ENCODE measurements at regions of chr12 and their contacts with region 1.

Region 1: GRCh38 chr12:9813821-9814809 is 13.2 kb upstream of the KLRF1 start:
- DNase-seq: peak; percentile 81
- H3K4me3 ChIP-seq: peak overlapping the region; percentile 27
- H3K27ac ChIP-seq: no peak overlapping the region
- H3K4me1 ChIP-seq: peaks cover 5% of the 10 kb centered on the region
- H3K27me3 ChIP-seq: no peaks in the 10 kb centered on the region
- CTCF ChIP-seq: peak; percentile 97

Region 2: GRCh38 chr12:9925708-9926393 is 111.7 kb after region 1 on chr12:
- CTCF ChIA-PET with region 1: no interaction called
- POLR2A ChIA-PET with region 1: no interaction called
- intact Hi-C with region 1: loop called (anchors 1 kb)
- DNase-seq: peak; percentile 59
- H3K4me3 ChIP-seq: no peak overlapping the region
- H3K27ac ChIP-seq: no peak overlapping the region
- H3K4me1 ChIP-seq: no peaks in the 10 kb centered on the region
- H3K27me3 ChIP-seq: peaks cover 21% of the 10 kb centered on the region
- CTCF ChIP-seq: peak; percentile 63

Region 3: GRCh38 chr12:10584415-10584814 is 770.3 kb after region 1 on chr12:
- CTCF ChIA-PET with region 1: no interaction called
- POLR2A ChIA-PET with region 1: no interaction called
- intact Hi-C with region 1: no loop called
- DNase-seq: no peak
- H3K4me3 ChIP-seq: no peak overlapping the region
- H3K27ac ChIP-seq: no peak overlapping the region
- H3K4me1 ChIP-seq: no peaks in the 10 kb centered on the region
- H3K27me3 ChIP-seq: no peaks in the 10 kb centered on the region
- CTCF ChIP-seq: no peak

Measured in A673 (cell line).